Heart right ventricle (tissue), 16 donors: ENCODE measurements at regions of chr5 and their contacts with region 1.

Region 1: DNA sequence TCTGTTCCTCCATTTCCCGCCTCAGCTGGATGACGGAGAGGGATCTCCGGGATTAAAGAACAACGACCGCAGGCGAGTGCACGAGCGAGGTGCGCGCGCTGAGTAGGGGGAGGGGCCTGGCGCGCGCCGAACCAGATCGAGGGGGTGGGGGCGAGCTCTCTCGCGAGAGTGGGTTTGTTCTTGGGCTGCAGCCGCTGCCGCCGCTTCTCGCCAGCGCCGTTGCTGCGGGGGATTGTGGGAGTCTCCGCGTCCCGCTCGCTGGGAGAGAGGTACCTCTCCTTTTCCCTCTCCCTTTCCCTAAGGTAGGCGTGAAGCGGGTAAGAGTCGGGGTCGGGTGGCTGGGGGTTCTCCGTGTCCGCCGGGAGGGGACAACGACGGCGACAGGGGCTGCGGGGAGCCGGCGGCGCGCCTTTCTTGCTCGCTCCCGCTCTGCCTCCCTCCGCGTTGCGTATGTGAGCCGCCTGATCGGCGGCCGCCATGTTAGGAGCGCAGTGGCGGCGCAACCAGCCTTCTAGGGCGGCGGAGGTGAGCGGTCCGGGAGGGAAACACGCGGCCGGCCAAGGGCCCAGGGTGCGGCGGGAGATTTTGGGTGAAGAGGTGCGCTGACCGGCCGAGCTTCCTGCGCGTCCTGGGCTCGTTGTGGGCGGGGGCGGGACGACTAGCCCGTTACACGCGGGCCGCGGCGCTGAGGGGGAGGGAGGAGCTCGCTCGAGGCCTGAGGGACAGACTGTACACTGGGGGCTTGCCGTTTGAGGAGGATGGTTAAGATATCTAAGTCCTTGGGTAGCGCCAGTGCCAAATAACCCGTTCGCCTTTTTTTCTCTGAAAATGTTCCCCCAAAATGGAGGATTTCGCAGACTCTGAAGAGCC is at the start of gene MATR3:
- DNase-seq: peak; percentile 96
- ATAC-seq: peak; percentile 96 to 98 (median 97)
- H3K4me3 ChIP-seq: peak within 1 kb of the TSS; percentile 70 to 99 (median 88)
- H3K27ac ChIP-seq: peak within 1 kb of the TSS; percentile 97 to 100 (median 100)
- H3K4me1 ChIP-seq: peaks cover 4 to 46% (median 40%) of the 10 kb centered on the region in 9 donors
- H3K27me3 ChIP-seq: no peaks in the 10 kb centered on the region
- CTCF ChIP-seq: no peak
- total RNA-seq, gene MATR3: 122 to 209 (median 176) TPM

Region 2: GRCh38 chr5:137649228-137649935 is 1644.4 kb before region 1 on chr5:
- intact Hi-C with region 1: no loop called
- DNase-seq: peak in 1 of 2 donors; percentile 44
- ATAC-seq: peak; percentile 38 to 84 (median 62)
- H3K4me3 ChIP-seq: no peak overlapping the region
- H3K27ac ChIP-seq: peak overlapping the region in 6 of 10 donors; percentile 2 to 60 (median 40)
- H3K4me1 ChIP-seq: peaks cover 0 to 46% (median 11%) of the 10 kb centered on the region in 9 donors
- H3K27me3 ChIP-seq: no peaks in the 10 kb centered on the region
- CTCF ChIP-seq: no peak

Region 3: GRCh38 chr5:139108063-139108824 is 185.5 kb before region 1 on chr5:
- intact Hi-C with region 1: no loop called
- DNase-seq: no peak
- ATAC-seq: peak in 3 of 8 donors; percentile 38 to 64 (median 55)
- H3K4me3 ChIP-seq: no peak overlapping the region
- H3K27ac ChIP-seq: peak overlapping the region in 4 of 10 donors; percentile 17 to 48 (median 34)
- H3K4me1 ChIP-seq: peaks cover 3 to 57% (median 21%) of the 10 kb centered on the region in 9 donors
- H3K27me3 ChIP-seq: no peaks in the 10 kb centered on the region
- CTCF ChIP-seq: no peak

Region 4: DNA sequence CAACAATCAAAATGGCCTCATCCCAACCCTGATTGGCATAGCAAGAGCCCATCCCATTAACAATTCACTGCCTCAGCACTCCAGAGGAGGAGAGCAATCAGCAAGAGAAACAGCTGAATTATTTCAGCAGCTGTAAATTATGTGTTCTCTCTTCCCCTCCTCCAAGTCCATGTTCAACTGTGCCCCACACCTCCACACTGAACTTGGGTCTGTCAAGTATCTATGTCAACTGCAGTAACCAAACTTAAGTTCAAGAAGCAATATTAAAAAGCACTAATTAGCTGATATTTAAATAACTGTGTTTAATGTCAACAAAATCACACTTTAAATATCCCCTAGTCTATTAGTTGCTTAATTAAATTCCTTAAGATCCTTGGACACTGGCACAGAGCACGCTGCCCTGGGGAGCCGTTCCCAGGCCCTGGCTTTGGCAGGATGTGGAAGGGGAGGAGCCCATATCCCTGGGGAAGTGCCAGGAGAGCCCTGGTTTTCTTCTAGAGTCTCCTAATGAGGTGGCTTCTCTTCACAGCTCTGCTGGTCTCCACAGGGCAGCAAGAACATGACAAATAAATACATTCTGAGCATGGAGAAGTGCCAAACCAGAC is 146.2 kb before region 1 on chr5:
- intact Hi-C with region 1: no loop called
- DNase-seq: peak; percentile 54 to 65
- ATAC-seq: peak; percentile 69 to 90 (median 86)
- H3K4me3 ChIP-seq: no peak overlapping the region
- H3K27ac ChIP-seq: peak overlapping the region in 3 of 10 donors; percentile 3 to 52 (median 14)
- H3K4me1 ChIP-seq: peaks cover 6 to 53% (median 44%) of the 10 kb centered on the region in 9 donors
- H3K27me3 ChIP-seq: no peaks in the 10 kb centered on the region
- CTCF ChIP-seq: no peak

Region 5: DNA sequence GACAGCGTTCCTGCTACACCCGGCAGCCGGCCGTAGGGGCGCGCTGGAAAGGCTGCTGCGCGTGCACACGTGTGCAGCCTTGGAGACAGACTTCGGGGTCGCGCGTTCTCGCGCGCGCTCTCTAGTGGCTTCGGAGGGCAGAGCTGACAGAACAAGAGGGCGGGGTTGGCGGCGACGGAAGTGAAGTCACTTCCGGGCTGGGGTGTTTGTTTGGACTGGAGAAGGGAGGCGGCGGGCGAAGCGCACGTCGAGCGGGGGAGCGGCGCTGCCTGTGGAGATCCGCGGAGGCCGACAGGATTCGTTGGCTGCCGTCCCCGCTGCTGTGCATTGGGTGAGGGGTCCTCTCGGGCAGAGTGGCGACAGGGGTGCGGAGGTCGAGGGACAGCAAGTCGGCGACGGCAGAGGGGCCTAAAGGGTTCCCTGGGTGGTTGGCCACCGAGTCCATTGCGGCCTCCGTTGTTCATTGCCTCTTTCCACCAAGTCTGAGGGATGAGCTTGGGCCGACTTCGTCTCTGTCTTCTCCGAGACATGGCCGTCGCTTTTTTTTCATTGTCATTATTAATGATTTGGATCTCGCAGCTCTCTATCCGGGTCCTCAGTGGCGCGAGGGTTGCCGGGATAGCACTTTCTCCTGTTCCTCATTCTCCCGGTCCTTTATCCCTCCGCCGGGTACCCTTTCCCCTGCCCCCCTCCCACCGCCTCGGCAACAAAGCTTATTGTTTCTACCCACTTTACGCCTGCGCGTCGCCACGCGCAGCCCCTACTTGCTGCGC is 48.1 kb after region 1 on chr5 and contains the start of gene PAIP2:
- intact Hi-C with region 1: loop called in 6 of 10 experiments (anchors 5 kb)
- DNase-seq: peak; percentile 98
- ATAC-seq: peak; percentile 97 to 99 (median 98)
- H3K4me3 ChIP-seq: peak within 1 kb of the TSS; percentile 69 to 97 (median 84)
- H3K27ac ChIP-seq: peak within 1 kb of the TSS; percentile 92 to 99 (median 98)
- H3K4me1 ChIP-seq: peaks cover 0 to 40% (median 31%) of the 10 kb centered on the region in 9 donors
- H3K27me3 ChIP-seq: no peaks in the 10 kb centered on the region
- CTCF ChIP-seq: peak; percentile 43 to 93 (median 76)
- total RNA-seq, gene PAIP2: 126 to 173 (median 139) TPM

Region 6: GRCh38 chr5:139392678-139393496 is 99.1 kb after region 1 on chr5:
- intact Hi-C with region 1: loop called in 1 of 10 experiments (anchors 5 kb)
- DNase-seq: peak in 1 of 2 donors; percentile 66
- ATAC-seq: peak in 7 of 8 donors; percentile 4 to 29 (median 16)
- H3K4me3 ChIP-seq: peak overlapping the region; percentile 50 to 80 (median 69)
- H3K27ac ChIP-seq: peak overlapping the region in 9 of 10 donors; percentile 89 to 97 (median 94)
- H3K4me1 ChIP-seq: peaks cover 7 to 89% (median 71%) of the 10 kb centered on the region in 9 donors
- H3K27me3 ChIP-seq: peaks cover 0 to 35% (median 0%) of the 10 kb centered on the region in 7 donors
- CTCF ChIP-seq: peak in 7 of 9 donors; percentile 35 to 64 (median 49)

Region 7: GRCh38 chr5:139417214-139417613 is 123.5 kb after region 1 on chr5:
- intact Hi-C with region 1: loop called in 1 of 10 experiments (anchors 5 kb)
- DNase-seq: peak in 1 of 2 donors; percentile 76
- ATAC-seq: peak; percentile 56 to 76 (median 70)
- H3K4me3 ChIP-seq: peak overlapping the region in 1 of 10 donors; percentile 4
- H3K27ac ChIP-seq: peak overlapping the region; percentile 68 to 93 (median 89)
- H3K4me1 ChIP-seq: peaks cover 40 to 74% (median 67%) of the 10 kb centered on the region in 9 donors
- H3K27me3 ChIP-seq: no peaks in the 10 kb centered on the region
- CTCF ChIP-seq: no peak

Region 8: DNA sequence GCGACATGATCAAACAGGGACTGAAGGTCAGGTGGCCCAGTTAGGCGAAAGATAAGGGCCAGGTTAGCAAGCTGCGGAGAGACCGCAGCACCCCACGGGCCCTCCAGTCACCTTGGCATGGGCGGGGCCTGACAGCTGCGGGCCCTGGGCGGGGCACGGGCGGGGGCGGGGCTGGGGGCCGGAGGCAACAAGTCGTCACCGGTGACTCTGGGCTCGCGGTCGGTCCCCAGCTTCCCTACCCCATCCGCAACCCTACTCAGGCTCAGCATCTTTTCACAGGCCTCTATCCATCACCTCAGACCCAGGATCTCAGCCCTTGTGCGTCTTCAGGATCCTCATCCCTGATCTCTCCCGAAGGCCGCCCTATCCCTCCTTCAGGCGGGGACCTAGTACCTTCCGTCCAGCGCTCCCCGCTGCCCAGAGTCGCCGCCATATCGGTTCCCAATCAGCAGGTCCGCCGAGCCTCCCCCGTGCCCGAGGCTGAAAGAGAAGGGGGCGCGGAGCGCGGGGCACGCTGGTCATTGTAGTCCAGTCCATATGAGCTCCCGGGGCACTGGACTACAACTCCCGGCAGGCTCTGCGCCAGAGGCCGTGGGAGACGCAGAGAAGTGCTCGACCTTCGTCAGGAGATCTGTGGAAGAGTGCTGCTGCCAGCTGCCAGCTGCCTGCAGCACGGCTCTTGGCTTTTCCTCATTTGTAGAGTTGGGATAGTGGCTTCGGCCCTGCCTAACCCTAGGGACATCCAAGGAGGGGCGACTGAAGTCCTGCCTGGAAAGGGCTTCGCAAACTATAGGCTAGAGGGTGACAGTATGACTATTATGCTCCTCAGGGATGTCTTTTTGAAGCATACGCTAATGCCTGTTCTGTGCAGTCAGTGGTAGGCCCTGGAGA is 145.5 kb after region 1 on chr5 and contains the start of gene DNAJC18:
- intact Hi-C with region 1: no loop called
- DNase-seq: peak; percentile 94 to 95
- ATAC-seq: peak; percentile 98 to 99 (median 99)
- H3K4me3 ChIP-seq: peak within 1 kb of the TSS; percentile 47 to 95 (median 78)
- H3K27ac ChIP-seq: peak within 1 kb of the TSS; percentile 85 to 98 (median 92)
- H3K4me1 ChIP-seq: peaks cover 0 to 22% (median 12%) of the 10 kb centered on the region in 9 donors
- H3K27me3 ChIP-seq: no peaks in the 10 kb centered on the region
- CTCF ChIP-seq: no peak
- total RNA-seq, gene DNAJC18: 9.5 to 21.1 (median 14.1) TPM